Cardiac septum (tissue), 1 donor: ENCODE measurements at regions of chr6 and their contacts with region 1.

Region 1: DNA sequence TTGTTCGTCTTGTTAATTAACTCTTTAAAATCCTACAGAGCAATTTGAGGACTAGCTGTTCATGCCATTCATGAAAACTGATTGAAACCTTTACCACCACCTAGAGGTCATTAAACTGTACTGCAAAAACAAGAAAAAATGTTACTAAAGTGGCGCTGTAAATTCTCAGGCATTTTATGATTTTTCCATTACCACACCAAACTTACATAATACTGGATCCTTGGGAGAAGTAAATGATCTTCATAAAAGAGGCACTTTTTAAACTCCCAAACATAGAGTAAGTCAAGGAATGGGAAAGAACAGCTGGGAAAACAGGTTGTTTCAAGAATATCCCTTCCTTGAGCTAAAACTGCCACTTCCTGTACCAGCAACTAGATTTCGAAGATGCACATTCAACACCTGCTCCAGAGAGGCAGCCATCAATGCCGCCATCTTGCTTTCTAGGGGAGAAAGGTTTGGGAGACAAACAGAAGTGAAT is 54.3 kb downstream of the MYLIP start:
- DNase-seq: no peak

Region 2: GRCh38 chr6:15691250-15691869 is 491.9 kb before region 1 on chr6:
- intact Hi-C with region 1: loop called (anchors 1 kb)
- DNase-seq: peak; percentile 92

Region 3: DNA sequence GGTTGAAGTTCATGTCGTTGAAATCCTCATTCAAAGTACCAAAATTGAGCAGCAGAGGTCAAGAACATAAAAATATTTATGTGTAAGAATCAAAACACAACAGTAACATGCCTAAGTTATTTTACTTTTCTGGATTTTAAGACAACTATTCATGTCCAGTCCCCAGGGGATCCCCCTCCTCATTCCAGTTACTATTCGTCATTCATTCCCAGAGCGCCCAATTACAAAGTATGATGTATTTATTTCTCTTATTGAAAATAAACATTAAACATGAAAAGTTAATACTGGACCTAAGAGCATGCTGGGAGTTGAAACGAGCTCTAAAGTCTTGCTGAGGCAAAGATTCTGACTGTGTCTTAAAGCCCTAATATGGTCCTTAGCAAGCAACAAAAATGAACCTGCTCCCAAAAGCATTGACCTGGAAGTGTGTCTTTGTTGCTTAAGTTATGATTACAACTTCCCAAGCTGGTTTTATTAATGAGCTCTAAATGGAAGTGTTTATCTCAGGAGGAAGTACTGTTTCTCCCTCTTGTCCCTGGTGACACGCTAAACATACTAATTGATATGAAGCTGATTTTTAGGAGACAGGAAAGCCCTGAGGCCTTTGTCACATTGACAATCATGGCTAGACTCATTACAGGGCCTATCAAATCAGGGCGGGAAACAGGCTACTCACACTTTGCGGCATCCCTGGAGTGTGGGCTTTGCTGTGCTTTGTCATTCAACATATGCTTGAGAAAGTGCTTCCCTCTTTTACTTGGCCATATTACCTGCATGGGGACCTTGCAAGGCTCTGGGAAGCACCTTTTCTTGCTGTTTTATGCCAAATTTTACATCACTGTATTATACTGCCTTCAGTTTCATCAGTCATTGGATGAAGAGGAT is 328.2 kb before region 1 on chr6:
- intact Hi-C with region 1: no loop called
- DNase-seq: no peak